PC-3 (cell line): ENCODE measurements at regions of chr7 and their contacts with region 1.

Region 1: GRCh38 chr7:149188213-149188612 is 7.1 kb upstream of the ZNF282 start:
- DNase-seq: no peak
- ATAC-seq: no peak; the same call in 1 of the 2 replicates
- H3K4me3 ChIP-seq: no peak overlapping the region
- H3K27ac ChIP-seq: no peak overlapping the region
- H3K4me1 ChIP-seq: no peaks in the 10 kb centered on the region
- H3K27me3 ChIP-seq: no peaks in the 10 kb centered on the region
- CTCF ChIP-seq: no peak

Region 2: DNA sequence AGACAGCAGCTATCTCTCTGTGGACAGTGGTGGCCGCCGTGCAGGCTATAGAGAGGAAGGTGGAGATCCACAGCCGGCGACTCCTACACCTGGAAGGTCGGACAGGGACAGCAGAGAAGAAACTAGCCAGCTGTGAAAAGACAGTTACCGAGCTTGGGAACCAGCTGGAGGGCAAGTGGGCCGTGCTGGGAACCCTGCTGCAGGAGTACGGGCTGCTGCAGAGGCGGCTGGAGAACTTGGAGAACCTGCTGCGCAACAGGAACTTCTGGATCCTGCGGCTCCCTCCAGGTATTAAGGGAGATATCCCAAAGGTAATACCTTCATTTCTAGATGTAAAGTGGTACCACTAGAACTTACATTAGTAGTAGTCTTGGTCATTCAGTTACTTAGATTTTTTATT is 34.2 kb before region 1 on chr7:
- CTCF ChIA-PET with region 1: no interaction called
- POLR2A ChIA-PET with region 1: no interaction called
- intact Hi-C with region 1: no loop called
- DNase-seq: no peak
- ATAC-seq: no peak
- H3K4me3 ChIP-seq: no peak overlapping the region
- H3K27ac ChIP-seq: no peak overlapping the region
- H3K4me1 ChIP-seq: no peaks in the 10 kb centered on the region
- H3K27me3 ChIP-seq: no peaks in the 10 kb centered on the region
- CTCF ChIP-seq: no peak

Region 3: GRCh38 chr7:149171892-149172533 is 16.2 kb before region 1 on chr7:
- CTCF ChIA-PET with region 1: no interaction called
- POLR2A ChIA-PET with region 1: interaction called, 11 read pairs
- intact Hi-C with region 1: no loop called
- DNase-seq: peak; percentile 87
- ATAC-seq: peak; percentile 100
- H3K4me3 ChIP-seq: no peak overlapping the region
- H3K27ac ChIP-seq: peak overlapping the region; percentile 79
- H3K4me1 ChIP-seq: peaks cover 13% of the 10 kb centered on the region
- H3K27me3 ChIP-seq: no peaks in the 10 kb centered on the region
- CTCF ChIP-seq: no peak

Region 4: GRCh38 chr7:149261829-149262617 is 73.8 kb after region 1 on chr7 and contains the start of gene ZNF783:
- CTCF ChIA-PET with region 1: no interaction called
- POLR2A ChIA-PET with region 1: no interaction called
- intact Hi-C with region 1: no loop called
- DNase-seq: peak; percentile 85
- ATAC-seq: peak; percentile 90
- H3K4me3 ChIP-seq: peak within 1 kb of the TSS; percentile 69
- H3K27ac ChIP-seq: peak within 1 kb of the TSS; percentile 82
- H3K4me1 ChIP-seq: peaks cover 18% of the 10 kb centered on the region
- H3K27me3 ChIP-seq: no peaks in the 10 kb centered on the region
- CTCF ChIP-seq: peak; percentile 62
- total RNA-seq, gene ZNF783: 6.9 and 7.0 TPM in 2 replicates